Spleen (tissue), 13 donors: ENCODE measurements at regions of chr9 and their contacts with region 1.

Region 1: GRCh38 chr9:123349691-123350480 is 6.1 kb upstream of the CRB2 start:
- DNase-seq: no peak
- H3K4me3 ChIP-seq: no peak overlapping the region
- H3K27ac ChIP-seq: no peak overlapping the region
- H3K4me1 ChIP-seq: peaks cover 0 to 44% (median 16%) of the 10 kb centered on the region in 6 donors
- H3K27me3 ChIP-seq: peaks cover 0 to 39% (median 0%) of the 10 kb centered on the region in 7 donors
- CTCF ChIP-seq: peak; percentile 76 to 96 (median 91)
- POLR2A ChIP-seq: no peak

Region 2: DNA sequence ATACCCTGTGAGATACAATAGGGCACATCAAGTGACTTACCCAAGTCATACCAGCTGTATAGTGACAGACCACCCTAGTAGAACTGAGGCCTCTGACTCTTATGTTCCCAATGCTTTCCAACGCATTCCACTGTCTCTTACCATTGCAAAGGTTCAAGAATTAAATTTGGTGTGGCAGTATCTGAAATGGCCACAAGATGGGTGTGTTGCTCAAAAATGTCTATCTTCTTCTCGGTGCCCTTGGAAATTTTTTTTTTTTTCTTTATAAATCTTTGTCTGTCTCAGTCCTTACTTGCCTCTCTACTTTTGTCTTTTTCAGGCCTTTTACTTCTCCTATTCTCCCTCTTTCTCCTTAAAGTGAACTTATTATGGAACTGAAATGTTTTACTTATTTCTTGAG is 268.1 kb before region 1 on chr9:
- intact Hi-C with region 1: loop called (anchors 2 kb)
- DNase-seq: no peak
- H3K4me3 ChIP-seq: no peak overlapping the region
- H3K27ac ChIP-seq: no peak overlapping the region
- H3K4me1 ChIP-seq: peaks cover 0 to 12% (median 0%) of the 10 kb centered on the region in 6 donors
- H3K27me3 ChIP-seq: no peaks in the 10 kb centered on the region
- CTCF ChIP-seq: peak in 9 of 11 experiments; percentile 44 to 65 (median 58)
- POLR2A ChIP-seq: no peak

Region 3: DNA sequence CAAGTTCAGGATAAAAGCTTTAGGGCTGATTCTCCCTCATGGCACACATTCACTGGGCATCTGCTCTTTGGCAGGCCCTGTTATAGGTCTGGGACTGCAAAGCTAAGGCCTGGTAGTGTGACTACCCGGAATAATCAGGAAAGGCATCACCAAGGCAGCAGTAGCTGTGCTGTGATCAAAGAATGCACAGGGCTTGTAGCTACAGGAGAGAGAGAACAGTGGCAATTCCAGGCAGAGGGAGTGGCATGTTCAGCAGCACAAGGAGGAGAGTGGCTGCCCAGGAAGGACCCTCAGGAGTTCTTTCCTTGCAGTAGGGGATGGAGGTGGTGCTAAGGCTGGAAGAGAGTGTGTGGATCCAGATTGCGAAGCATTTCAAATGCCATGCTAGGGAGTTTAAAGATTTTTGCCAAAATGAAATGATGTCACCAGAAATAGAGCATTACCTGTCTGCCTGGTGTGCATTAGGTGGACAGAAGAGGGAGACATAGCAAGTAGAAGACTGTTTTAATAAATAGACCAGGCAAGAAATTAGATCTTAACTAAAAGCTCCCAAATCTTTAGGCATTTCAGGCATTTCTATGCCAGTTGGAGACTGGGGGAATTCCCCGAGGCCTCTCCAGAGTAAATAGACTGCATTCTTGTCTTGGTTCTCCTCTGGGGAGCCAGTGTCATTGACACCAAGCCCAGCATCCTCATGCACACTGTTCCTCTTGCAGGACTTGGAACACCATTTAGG is 247.3 kb before region 1 on chr9:
- intact Hi-C with region 1: loop called (anchors 10 kb)
- DNase-seq: no peak
- H3K4me3 ChIP-seq: no peak overlapping the region
- H3K27ac ChIP-seq: peak overlapping the region in 1 of 8 donors; percentile 30
- H3K4me1 ChIP-seq: no peaks in the 10 kb centered on the region
- H3K27me3 ChIP-seq: no peaks in the 10 kb centered on the region
- CTCF ChIP-seq: peak in 1 of 11 experiments; percentile 30
- POLR2A ChIP-seq: no peak

Region 4: DNA sequence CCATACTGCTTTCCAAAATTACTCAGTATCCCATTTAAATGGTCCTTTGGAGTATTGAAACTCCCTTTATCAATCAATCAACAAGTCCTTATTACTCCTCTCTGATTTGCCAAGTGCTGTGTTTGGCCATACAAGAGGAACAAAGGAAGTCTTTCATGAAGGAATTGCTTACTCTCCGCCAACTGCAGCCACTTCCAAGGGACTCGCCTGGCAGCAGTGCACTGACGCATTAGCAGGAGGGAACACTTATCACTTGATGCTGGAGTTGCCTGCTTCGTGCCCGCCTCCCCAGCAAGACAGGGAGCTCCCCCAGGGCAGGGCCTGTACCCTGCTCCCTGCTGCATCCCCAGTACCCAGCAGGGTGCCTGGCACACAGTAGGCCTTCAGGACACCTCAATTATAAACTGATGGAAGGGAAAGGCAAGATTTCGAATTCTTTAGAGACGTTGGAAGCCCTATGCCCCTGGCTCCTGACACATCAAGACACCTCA is 104.0 kb after region 1 on chr9:
- intact Hi-C with region 1: no loop called
- DNase-seq: peak; percentile 43
- H3K4me3 ChIP-seq: no peak overlapping the region
- H3K27ac ChIP-seq: no peak overlapping the region
- H3K4me1 ChIP-seq: no peaks in the 10 kb centered on the region
- H3K27me3 ChIP-seq: no peaks in the 10 kb centered on the region
- CTCF ChIP-seq: no peak
- POLR2A ChIP-seq: no peak

Region 5: GRCh38 chr9:123608104-123608503 is 258.2 kb after region 1 on chr9:
- intact Hi-C with region 1: no loop called
- DNase-seq: no peak
- H3K4me3 ChIP-seq: no peak overlapping the region
- H3K27ac ChIP-seq: peak overlapping the region in 4 of 8 donors; percentile 21 to 55 (median 38)
- H3K4me1 ChIP-seq: peaks cover 0 to 30% (median 5%) of the 10 kb centered on the region in 6 donors
- H3K27me3 ChIP-seq: no peaks in the 10 kb centered on the region
- CTCF ChIP-seq: no peak
- POLR2A ChIP-seq: no peak